ENCODE measurements at regions of chr12 and their contacts with region 1.

Region 1: GRCh38 chr12:98998697-98999299 is 353.7 kb downstream of the APAF1 start:
- DNase-seq: no peak
- H3K4me3 ChIP-seq: no peak overlapping the region
- H3K27ac ChIP-seq: no peak overlapping the region
- H3K27me3 ChIP-seq: peaks cover 2% of the 10 kb centered on the region
- CTCF ChIP-seq: peak; percentile 72

Region 2: DNA sequence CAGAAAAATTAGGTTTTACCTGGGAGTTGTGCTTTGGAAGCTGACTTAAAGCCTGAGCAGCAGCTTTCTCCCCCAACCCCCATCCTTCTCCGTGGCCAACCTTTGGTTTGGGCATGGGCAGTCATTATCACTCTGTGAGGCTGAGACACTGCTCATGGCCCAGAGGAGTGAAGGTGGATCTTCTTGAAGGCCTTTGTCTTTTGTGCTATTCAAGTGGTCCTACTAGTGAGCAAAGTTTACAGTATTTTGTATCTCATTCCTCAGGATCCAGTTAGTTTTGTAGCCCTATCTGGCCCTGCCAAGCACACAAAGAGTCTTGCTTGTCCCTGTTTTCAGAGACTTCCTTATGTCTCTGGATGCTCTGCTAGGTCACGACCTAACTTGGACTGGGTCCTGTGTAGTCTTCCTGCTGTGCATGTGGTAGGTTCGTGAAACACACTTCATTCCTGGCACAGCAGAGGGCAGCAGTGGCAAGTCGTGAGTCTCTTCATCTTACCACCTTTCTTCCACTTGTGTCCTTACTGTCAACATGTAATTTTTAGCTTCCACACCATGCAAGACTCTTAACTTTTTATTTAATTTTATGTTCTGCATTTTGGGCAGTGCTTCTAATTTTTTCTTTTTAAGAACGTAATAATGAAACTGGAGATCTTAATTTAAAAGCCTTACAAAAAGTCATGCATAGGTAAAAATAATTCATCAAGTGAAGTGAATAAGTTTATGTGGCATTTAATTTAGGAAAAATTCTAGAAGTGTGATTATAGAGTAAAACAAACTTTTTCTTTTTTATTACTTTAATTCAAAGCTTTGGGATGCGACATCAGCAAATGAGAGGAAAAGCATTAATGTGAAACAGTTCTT is 300.0 kb before region 1 on chr12:
- CTCF ChIA-PET with region 1: interaction called, 44 read pairs
- POLR2A ChIA-PET with region 1: no interaction called
- DNase-seq: peak; percentile 11
- H3K4me3 ChIP-seq: no peak overlapping the region
- H3K27ac ChIP-seq: no peak overlapping the region
- H3K27me3 ChIP-seq: no peaks in the 10 kb centered on the region
- CTCF ChIP-seq: peak; percentile 76

Region 3: GRCh38 chr12:98719515-98720504 is 279.0 kb before region 1 on chr12:
- CTCF ChIA-PET with region 1: interaction called, 26 read pairs
- POLR2A ChIA-PET with region 1: no interaction called
- DNase-seq: no peak
- H3K4me3 ChIP-seq: no peak overlapping the region
- H3K27ac ChIP-seq: no peak overlapping the region
- H3K27me3 ChIP-seq: no peaks in the 10 kb centered on the region
- CTCF ChIP-seq: no peak

Region 4: DNA sequence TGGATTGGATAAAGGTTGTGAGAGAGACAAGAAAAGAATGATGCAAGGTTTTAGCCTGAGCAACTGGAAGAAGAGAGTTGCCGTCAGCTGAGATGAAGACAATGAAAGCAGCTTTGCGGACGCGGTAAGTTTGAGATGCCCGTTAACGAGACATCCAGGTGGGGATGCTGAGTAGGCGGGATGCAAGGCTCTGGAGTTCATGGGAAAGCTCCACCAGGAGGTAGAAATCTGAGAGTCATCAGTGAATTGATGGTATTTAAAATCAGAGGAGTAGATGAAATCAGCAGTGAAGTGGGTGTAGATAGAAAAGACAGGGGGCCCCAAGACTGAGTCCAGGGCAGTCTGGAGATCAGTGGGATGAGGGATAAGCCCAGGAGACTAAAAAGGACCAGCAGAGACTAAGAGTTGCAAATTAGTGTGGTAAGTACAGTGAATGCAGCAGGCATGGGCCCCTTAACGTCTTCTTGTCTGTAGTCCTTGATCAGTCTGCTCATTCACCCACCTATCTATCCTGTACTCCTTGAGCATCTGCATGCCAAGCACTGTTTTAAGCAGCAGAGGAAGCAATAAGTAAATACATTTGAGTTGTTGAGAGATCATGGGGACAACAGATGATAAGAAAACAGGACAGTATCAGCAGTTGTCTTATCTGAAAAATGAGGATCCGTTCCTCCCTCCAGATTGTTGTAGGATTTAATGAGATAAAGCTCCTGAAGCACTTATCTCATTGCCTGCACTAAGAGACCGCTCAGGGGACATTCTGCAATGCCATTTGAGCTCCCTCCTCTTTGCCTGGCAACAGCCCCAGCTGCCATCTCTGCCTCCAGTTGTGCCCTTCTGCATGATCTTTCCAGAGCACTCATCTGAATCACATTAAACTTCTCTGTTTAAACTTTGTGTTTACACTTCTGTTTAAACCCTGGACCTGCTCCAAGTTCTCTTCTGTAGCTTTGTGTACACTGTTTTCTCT is 262.2 kb before region 1 on chr12:
- CTCF ChIA-PET with region 1: interaction called, 18 read pairs
- POLR2A ChIA-PET with region 1: no interaction called
- DNase-seq: no peak
- H3K4me3 ChIP-seq: no peak overlapping the region
- H3K27ac ChIP-seq: no peak overlapping the region
- H3K27me3 ChIP-seq: no peaks in the 10 kb centered on the region
- CTCF ChIP-seq: 0 out of 2 replicates have a peak, but pooled peaks have one; percentile 1

Region 5: GRCh38 chr12:99029511-99030271 is 30.9 kb after region 1 on chr12:
- CTCF ChIA-PET with region 1: no interaction called
- POLR2A ChIA-PET with region 1: no interaction called
- DNase-seq: no peak
- H3K4me3 ChIP-seq: no peak overlapping the region
- H3K27ac ChIP-seq: no peak overlapping the region
- H3K27me3 ChIP-seq: no peaks in the 10 kb centered on the region
- CTCF ChIP-seq: no peak